Ascending aorta (tissue), 2 donors: ENCODE measurements at regions of chr19 and their contacts with region 1.

Region 1: DNA sequence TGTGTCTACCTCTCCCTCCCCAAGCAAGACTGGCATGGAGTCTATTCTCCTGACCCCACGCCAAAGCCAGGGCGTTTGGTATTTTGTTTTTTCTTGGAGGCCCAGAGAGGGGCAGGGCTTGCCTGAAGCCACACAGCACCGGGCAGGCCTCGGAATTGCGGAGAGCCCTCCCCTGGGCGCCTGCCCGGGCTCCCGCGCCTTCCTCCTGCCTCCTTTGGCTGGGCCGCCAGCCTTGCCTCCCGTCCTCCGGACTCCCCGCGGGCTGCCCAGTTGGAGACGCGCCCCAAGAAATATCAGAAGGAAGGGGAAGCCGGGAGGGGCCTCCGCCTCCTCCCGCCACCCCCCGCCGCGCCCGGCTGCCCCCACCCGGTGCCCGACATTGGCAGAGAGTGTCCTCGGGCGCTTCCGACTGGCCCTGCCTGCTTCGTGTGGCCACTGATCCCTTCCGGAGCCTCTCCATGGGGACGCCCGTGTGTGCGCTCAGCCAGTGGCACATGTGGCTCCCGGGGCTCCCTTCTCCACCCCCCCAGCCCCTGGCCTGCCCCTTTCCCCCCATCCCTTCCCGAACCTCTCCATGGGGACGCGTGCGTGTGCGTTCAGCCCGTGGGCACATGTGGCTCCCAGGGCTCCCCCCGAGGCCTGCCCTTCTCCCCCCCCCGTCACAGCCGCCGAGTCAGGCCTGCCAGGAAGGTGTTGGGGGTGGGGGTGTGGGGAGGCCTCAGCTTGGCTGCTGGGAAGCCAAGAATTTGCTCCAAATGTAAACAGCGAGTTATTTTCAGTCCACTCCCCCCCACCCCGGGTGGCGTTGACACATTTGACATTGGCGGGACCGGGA is 37.3 kb downstream of the NFIC start:
- DNase-seq: peak; percentile 81 to 97
- H3K4me3 ChIP-seq: peak overlapping the region; percentile 60 to 65
- H3K27ac ChIP-seq: peak overlapping the region; percentile 98 to 100
- H3K4me1 ChIP-seq: peaks cover 6 to 58% of the 10 kb centered on the region in 2 donors
- H3K27me3 ChIP-seq: no peaks in the 10 kb centered on the region
- CTCF ChIP-seq: no peak

Region 2: DNA sequence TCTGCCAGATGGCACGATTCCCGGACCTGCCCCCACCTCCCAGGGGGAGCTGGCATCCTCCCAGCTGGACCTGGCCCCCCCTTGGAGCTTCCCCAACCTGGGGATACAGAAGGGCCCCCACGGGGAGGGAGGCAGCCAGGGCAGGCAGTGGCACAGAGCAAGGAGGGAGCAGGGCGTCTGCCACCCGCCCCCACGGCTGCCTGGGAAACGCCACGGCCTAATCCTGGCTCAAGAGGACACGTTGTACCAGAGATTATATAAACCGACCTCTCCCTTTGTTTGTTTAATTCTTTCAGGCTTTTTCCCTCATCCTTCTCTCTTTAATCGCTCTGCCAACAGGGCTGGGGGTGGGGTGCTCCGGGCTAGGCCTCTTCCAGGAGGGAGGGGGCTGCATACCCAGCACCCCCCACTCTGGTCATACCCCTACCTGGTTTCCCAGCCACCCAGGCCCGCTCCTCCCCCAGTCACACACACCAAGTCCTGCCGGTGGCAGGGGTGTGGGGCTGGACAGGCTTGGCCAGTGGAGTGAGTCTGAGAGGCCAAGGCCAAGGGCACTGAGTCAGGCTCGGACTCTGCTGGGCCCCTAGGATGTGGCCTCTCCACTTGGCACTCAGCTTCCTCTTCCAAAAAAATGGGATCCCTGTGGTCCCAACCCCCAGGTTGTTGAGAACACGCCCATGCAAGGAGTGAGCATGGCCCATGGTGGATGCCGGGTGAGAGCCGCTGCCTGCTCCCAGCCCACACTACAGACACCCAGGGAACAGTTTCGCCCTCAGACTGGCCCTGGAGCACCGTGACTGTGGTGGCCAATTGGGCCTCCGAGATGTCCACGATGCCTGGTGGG is 66.8 kb before region 1 on chr19:
- intact Hi-C with region 1: loop called (anchors 2 kb)
- DNase-seq: peak; percentile 76 to 97
- H3K4me3 ChIP-seq: no peak overlapping the region
- H3K27ac ChIP-seq: peak overlapping the region; percentile 93 to 98
- H3K4me1 ChIP-seq: peaks cover 22 to 50% of the 10 kb centered on the region in 2 donors
- H3K27me3 ChIP-seq: no peaks in the 10 kb centered on the region
- CTCF ChIP-seq: peak in 1 of 3 experiments; percentile 0

Region 3: GRCh38 chr19:3365836-3366752 is 37.6 kb before region 1 on chr19 and contains the start of gene NFIC:
- intact Hi-C with region 1: loop called (anchors 2 kb)
- DNase-seq: peak in 1 of 2 donors; percentile 90
- H3K4me3 ChIP-seq: peak within 1 kb of the TSS; percentile 99
- H3K27ac ChIP-seq: peak within 1 kb of the TSS; percentile 100
- H3K4me1 ChIP-seq: peaks cover 18 to 37% of the 10 kb centered on the region in 2 donors
- H3K27me3 ChIP-seq: no peaks in the 10 kb centered on the region
- CTCF ChIP-seq: no peak
- total RNA-seq, gene NFIC: 194 TPM

Region 4: DNA sequence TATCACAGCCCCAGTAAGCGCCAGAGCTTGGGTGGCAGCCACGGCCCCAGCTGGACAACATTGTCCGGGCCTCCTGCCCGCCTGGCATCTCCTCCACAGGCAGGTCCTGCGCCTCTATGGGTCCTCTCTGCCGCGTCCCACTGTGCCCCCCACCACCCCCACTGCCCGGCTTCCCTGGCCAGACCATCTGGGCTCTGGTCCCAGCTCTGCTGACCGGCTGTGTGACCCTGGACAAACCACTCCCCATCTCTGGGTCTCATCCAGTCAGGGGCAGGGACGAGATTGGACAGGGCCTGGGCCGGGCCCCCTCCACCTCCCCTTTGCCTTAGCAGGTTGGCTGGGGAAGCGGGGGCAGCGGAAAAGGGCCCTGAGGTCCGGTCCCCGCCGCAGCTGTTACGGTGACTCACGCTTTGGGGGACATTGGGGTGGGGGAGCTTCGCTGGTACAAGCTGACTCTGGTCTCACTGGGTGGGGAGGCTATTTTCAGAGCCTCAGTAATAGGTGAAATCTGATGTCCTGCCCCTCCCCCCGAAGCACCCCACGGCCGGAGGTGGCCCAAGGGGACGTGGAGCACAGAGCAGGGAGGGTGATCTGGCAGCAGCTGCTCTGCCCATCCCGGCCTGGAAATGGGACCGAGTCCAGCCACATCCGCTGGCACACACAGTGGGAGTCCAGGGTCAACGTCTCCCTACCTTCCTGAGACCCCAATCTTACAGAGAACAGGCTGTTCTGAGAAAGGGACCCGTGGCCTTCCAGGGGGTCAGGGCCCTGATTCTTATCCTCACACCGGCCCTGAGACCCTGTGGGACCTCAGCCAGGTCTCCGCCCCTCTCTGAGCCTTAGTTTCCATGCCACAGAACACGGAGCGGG is 28.2 kb before region 1 on chr19:
- intact Hi-C with region 1: loop called (anchors 1 kb)
- DNase-seq: peak; percentile 78 to 96
- H3K4me3 ChIP-seq: peak overlapping the region; percentile 9 to 47
- H3K27ac ChIP-seq: peak overlapping the region; percentile 93 to 96
- H3K4me1 ChIP-seq: peaks cover 20 to 42% of the 10 kb centered on the region in 2 donors
- H3K27me3 ChIP-seq: no peaks in the 10 kb centered on the region
- CTCF ChIP-seq: no peak

Region 5: DNA sequence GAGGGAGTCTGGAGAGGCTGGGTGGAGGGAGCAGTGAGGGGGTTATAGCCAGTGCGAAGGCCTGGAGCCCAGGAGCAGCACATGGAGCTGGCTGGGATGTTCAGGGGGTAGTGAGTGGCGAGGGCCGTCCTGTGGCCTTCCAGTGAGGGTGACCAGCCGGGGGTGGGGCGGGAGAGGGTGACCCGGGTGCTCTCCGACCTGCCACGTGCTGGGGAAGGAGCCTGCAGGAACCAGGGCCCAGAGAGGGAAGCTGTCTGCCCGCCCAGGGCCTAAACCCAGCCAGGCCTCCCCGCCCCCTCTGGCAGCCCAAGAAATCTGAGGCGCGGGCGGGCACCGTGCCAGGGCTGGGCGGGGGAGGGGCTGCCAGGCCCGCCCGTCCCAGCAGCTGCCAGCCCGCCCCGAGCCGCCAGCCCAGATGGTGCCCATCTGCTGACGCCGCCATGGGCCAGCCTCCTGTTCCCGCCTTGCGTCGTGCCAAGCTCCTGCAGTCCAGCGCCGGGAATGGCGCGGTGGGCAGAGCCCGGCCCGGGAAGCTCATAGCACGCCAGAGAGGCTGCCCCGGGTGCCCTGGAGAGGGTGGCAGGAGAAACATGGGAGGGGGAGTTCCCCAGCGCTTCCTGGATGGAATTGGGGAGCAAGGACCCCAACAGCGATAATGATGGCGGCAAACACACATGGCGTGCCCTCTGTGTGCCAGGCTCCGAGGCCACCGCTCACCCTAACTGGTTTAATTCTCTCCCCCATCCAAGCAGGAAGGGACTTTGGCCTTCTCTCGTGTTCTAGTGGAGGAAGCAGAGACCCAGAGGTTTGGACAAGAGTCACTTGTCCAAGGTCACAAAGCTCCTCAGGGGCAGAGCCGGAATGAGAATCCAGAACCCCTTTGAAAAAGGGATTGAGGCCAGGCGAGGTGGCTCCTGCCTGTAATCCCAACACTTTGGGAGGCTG is 15.8 kb before region 1 on chr19:
- intact Hi-C with region 1: loop called (anchors 1 kb)
- DNase-seq: peak; percentile 71 to 92
- H3K4me3 ChIP-seq: peak overlapping the region in 1 of 2 donors; percentile 27
- H3K27ac ChIP-seq: peak overlapping the region; percentile 75 to 84
- H3K4me1 ChIP-seq: peaks cover 38 to 69% of the 10 kb centered on the region in 2 donors
- H3K27me3 ChIP-seq: no peaks in the 10 kb centered on the region
- CTCF ChIP-seq: peak in 2 of 3 experiments; percentile 12 to 42

Region 6: DNA sequence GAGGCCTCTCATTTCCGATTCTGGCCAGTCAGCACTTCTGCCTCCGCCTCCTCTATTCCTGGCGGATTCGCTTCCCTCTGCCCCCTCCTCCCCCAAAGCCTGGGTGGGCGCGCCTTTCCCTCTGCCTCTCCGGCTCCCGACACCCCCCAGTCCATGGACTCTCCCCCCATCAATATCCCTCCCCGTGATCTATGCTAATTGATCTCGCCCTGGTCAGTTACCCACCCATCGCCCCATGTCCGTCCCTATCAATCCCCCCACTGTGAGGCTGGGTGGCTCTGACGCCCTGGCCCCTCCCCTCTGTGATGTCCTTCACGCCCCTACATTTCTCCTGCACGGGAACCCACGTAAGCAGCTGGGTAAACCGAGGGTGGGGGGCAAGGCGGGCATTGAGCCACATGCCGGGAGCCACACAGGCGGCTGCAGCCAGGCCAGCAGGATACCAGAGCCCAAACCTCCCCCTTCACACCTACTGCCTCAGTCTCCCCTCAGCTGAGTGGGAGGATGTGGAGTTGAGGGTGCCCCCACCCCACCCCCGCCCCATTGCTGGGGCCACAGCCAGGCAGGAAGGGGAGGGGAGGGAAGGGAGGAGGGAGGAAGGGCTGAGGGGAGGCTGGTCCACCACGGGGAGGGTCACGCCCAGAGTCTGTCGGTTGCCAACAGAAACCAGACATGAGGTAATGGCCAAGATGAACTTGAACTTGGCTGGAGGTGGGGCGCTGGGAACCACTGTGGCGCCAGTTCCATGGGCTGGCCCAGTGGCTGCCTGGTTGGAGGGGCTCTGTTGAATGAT is 55.6 kb after region 1 on chr19:
- intact Hi-C with region 1: loop called (anchors 2 kb)
- DNase-seq: peak; percentile 80 to 96
- H3K4me3 ChIP-seq: peak overlapping the region in 1 of 2 donors; percentile 28
- H3K27ac ChIP-seq: peak overlapping the region; percentile 98 to 99
- H3K4me1 ChIP-seq: peaks cover 32 to 46% of the 10 kb centered on the region in 2 donors
- H3K27me3 ChIP-seq: no peaks in the 10 kb centered on the region
- CTCF ChIP-seq: no peak